Activated naive CD4-positive, alpha-beta T cell treated with anti-CD3 and anti-CD28 coated beads for 36 hours (primary cell): ENCODE measurements at regions of chr4 and their contacts with region 1.

Region 1: GRCh38 chr4:80215449-80216052 is 18.2 kb downstream of the PRDM8 start:
- DNase-seq: no peak
- H3K4me3 Mint-ChIP-seq: no peak overlapping the region
- H3K27ac Mint-ChIP-seq: no peak overlapping the region
- H3K4me1 Mint-ChIP-seq: peaks cover 1% of the 10 kb centered on the region
- H3K27me3 Mint-ChIP-seq: peaks cover 9% of the 10 kb centered on the region

Region 2: GRCh38 chr4:79042079-79042674 is 1173.4 kb before region 1 on chr4:
- CTCF ChIA-PET with region 1: no interaction called
- intact Hi-C with region 1: loop called (anchors 1 kb)
- DNase-seq: peak; percentile 7
- H3K4me3 Mint-ChIP-seq: no peak overlapping the region
- H3K27ac Mint-ChIP-seq: no peak overlapping the region
- H3K4me1 Mint-ChIP-seq: no peaks in the 10 kb centered on the region
- H3K27me3 Mint-ChIP-seq: no peaks in the 10 kb centered on the region

Region 3: GRCh38 chr4:79241846-79242245 is 973.7 kb before region 1 on chr4:
- CTCF ChIA-PET with region 1: no interaction called
- intact Hi-C with region 1: loop called (anchors 10 kb)
- DNase-seq: no peak
- H3K4me3 Mint-ChIP-seq: no peak overlapping the region
- H3K27ac Mint-ChIP-seq: no peak overlapping the region
- H3K4me1 Mint-ChIP-seq: no peaks in the 10 kb centered on the region
- H3K27me3 Mint-ChIP-seq: no peaks in the 10 kb centered on the region

Region 4: DNA sequence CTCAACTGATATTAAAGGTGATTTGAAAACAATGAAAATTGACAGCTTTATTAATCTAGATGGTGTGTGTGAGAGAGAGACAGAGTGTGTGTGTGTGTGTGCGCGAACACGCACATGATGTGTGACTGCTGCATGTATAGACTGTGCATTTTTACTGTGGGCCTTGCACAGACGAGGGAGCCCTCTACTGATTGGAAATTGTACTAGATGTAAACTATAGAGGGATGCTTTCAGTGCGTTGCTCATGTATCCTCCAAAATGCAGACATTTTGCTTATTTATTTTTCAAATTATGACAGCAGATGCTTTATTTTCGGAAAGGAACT is 639.2 kb before region 1 on chr4:
- CTCF ChIA-PET with region 1: no interaction called
- intact Hi-C with region 1: loop called (anchors 10 kb)
- DNase-seq: peak; percentile 25
- H3K4me3 Mint-ChIP-seq: no peak overlapping the region
- H3K27ac Mint-ChIP-seq: no peak overlapping the region
- H3K4me1 Mint-ChIP-seq: no peaks in the 10 kb centered on the region
- H3K27me3 Mint-ChIP-seq: no peaks in the 10 kb centered on the region

Region 5: GRCh38 chr4:79917246-79917645 is 298.3 kb before region 1 on chr4:
- CTCF ChIA-PET with region 1: interaction called, 10 read pairs
- intact Hi-C with region 1: loop called (anchors 1 kb)
- DNase-seq: peak; percentile 67
- H3K4me3 Mint-ChIP-seq: no peak overlapping the region
- H3K27ac Mint-ChIP-seq: no peak overlapping the region
- H3K4me1 Mint-ChIP-seq: peaks cover 2% of the 10 kb centered on the region
- H3K27me3 Mint-ChIP-seq: no peaks in the 10 kb centered on the region

Region 6: GRCh38 chr4:80202190-80202711 is 13.3 kb before region 1 on chr4:
- CTCF ChIA-PET with region 1: interaction called, 9 read pairs
- intact Hi-C with region 1: loop called (anchors 1 kb)
- DNase-seq: peak; percentile 79
- H3K4me3 Mint-ChIP-seq: peak overlapping the region; percentile 70
- H3K27ac Mint-ChIP-seq: no peak overlapping the region
- H3K4me1 Mint-ChIP-seq: peaks cover 20% of the 10 kb centered on the region
- H3K27me3 Mint-ChIP-seq: peaks cover 20% of the 10 kb centered on the region

Region 7: DNA sequence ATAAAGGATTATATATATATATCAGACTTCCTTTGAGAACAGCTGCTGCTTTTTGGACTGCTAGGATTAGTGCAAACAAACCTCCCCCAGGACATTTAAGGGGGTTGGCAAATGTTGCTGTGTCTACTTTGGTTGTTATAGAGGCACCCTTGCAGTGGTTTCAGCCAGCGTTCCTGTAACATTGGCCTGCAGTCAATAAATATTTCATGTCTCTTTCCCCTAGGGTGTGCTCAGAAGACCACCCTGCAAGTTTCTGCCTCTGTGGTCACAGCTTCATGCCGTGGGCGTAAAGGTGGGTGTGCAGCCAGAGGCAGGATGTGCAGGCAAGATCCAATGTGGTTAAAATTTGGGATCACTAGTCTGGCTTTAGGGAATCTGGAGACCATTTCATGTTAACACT is 79.8 kb after region 1 on chr4:
- CTCF ChIA-PET with region 1: no interaction called
- intact Hi-C with region 1: no loop called
- DNase-seq: no peak
- H3K4me3 Mint-ChIP-seq: no peak overlapping the region
- H3K27ac Mint-ChIP-seq: no peak overlapping the region
- H3K4me1 Mint-ChIP-seq: no peaks in the 10 kb centered on the region
- H3K27me3 Mint-ChIP-seq: peaks cover 7% of the 10 kb centered on the region